ENCODE measurements at regions of chr2 and their contacts with region 1.

Region 1: GRCh38 chr2:157443795-157444640 is at the start of gene CYTIP:
- DNase-seq: peak; percentile 87
- H3K4me3 Mint-ChIP-seq: peak within 1 kb of the TSS; percentile 96
- H3K27ac Mint-ChIP-seq: peak within 1 kb of the TSS; percentile 96
- H3K4me1 Mint-ChIP-seq: peaks cover 41% of the 10 kb centered on the region
- H3K27me3 Mint-ChIP-seq: no peaks in the 10 kb centered on the region
- total RNA-seq, gene CYTIP: 234 to 279 TPM

Region 2: GRCh38 chr2:157386247-157386646 is 57.8 kb before region 1 on chr2:
- CTCF ChIA-PET with region 1: no interaction called
- POLR2A ChIA-PET with region 1: no interaction called
- DNase-seq: no peak
- H3K4me3 Mint-ChIP-seq: no peak overlapping the region
- H3K27ac Mint-ChIP-seq: no peak overlapping the region
- H3K4me1 Mint-ChIP-seq: peaks cover 28% of the 10 kb centered on the region
- H3K27me3 Mint-ChIP-seq: no peaks in the 10 kb centered on the region

Region 3: DNA sequence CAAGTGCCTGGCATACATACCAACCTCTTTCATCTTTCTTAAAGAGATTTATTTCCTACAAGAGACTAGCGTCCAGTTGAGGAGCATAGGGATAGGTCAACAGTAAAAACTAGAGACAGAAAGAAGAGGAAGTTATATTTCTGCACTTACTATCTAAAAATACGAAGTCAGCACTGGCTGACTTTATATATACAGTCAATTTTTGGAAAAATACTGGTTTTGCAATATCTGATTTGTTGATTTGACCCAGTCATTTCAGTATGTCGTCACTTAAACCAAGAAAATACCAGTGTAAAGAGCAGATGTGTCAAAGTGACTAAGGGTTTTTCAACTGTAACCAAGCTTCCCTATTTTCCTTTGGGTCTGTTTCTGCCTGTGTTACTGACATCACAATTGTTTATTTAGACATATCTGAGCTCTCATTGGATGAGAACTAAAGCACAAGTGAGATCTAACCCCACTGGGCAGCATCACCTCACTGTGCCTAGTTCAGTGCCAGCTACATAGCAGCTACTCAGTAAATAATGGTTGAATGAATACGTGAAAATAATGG is 23.2 kb before region 1 on chr2:
- CTCF ChIA-PET with region 1: interaction called, 19 read pairs
- POLR2A ChIA-PET with region 1: interaction called, 18 read pairs
- DNase-seq: no peak
- H3K4me3 Mint-ChIP-seq: no peak overlapping the region
- H3K27ac Mint-ChIP-seq: peak overlapping the region; percentile 93
- H3K4me1 Mint-ChIP-seq: peaks cover 79% of the 10 kb centered on the region
- H3K27me3 Mint-ChIP-seq: no peaks in the 10 kb centered on the region

Region 4: GRCh38 chr2:157433394-157433793 is 10.6 kb before region 1 on chr2:
- CTCF ChIA-PET with region 1: interaction called, 27 read pairs
- POLR2A ChIA-PET with region 1: interaction called, 18 read pairs
- DNase-seq: no peak
- H3K4me3 Mint-ChIP-seq: peak overlapping the region; percentile 96
- H3K27ac Mint-ChIP-seq: peak overlapping the region; percentile 96
- H3K4me1 Mint-ChIP-seq: peaks cover 76% of the 10 kb centered on the region
- H3K27me3 Mint-ChIP-seq: no peaks in the 10 kb centered on the region

Region 5: GRCh38 chr2:157460384-157460837 is 16.4 kb after region 1 on chr2:
- CTCF ChIA-PET with region 1: interaction called, 37 read pairs
- POLR2A ChIA-PET with region 1: interaction called, 7 read pairs
- DNase-seq: no peak
- H3K4me3 Mint-ChIP-seq: peak overlapping the region; percentile 54
- H3K27ac Mint-ChIP-seq: peak overlapping the region; percentile 65
- H3K4me1 Mint-ChIP-seq: peaks cover 94% of the 10 kb centered on the region
- H3K27me3 Mint-ChIP-seq: no peaks in the 10 kb centered on the region

Region 6: DNA sequence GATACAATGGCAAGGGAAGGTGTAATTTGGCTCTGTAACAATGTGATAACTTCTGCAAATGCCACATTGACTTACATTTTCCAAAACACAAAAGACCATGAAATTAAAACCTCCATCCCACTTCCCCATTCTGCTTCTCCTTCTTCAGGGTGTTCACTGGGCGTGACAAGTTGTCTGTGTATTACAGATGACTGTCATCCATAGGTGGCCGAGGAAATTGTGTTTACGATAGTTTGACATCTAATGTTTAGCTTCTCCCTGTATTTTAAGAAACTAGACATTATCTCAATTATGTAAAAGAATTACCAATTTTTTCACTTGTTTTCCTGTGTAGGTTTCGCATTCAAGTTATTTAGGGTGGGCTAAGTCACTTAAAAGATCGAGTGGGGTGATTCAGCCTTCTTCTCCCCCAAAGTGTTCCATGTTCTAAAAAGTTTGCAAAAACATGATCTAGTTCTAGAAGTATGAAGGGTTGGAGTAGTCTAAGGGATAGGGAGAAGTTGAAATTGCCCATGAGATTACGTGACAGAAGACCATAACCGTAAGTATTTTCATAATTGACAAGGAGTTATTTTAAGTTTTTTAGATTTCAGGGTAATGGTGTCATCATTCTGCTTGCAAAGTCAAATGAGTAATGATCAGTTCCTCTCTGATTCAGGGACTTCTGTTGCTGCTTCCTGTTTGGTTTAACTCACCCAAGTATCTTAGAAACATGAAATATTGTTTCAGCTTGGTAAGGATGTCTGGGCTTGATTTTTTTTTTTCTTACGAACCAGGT is 25.1 kb after region 1 on chr2:
- CTCF ChIA-PET with region 1: interaction called, 10 read pairs
- POLR2A ChIA-PET with region 1: interaction called, 13 read pairs
- DNase-seq: peak; percentile 52
- H3K4me3 Mint-ChIP-seq: peak overlapping the region; percentile 76
- H3K27ac Mint-ChIP-seq: peak overlapping the region; percentile 98
- H3K4me1 Mint-ChIP-seq: peaks cover 94% of the 10 kb centered on the region
- H3K27me3 Mint-ChIP-seq: no peaks in the 10 kb centered on the region

Region 7: DNA sequence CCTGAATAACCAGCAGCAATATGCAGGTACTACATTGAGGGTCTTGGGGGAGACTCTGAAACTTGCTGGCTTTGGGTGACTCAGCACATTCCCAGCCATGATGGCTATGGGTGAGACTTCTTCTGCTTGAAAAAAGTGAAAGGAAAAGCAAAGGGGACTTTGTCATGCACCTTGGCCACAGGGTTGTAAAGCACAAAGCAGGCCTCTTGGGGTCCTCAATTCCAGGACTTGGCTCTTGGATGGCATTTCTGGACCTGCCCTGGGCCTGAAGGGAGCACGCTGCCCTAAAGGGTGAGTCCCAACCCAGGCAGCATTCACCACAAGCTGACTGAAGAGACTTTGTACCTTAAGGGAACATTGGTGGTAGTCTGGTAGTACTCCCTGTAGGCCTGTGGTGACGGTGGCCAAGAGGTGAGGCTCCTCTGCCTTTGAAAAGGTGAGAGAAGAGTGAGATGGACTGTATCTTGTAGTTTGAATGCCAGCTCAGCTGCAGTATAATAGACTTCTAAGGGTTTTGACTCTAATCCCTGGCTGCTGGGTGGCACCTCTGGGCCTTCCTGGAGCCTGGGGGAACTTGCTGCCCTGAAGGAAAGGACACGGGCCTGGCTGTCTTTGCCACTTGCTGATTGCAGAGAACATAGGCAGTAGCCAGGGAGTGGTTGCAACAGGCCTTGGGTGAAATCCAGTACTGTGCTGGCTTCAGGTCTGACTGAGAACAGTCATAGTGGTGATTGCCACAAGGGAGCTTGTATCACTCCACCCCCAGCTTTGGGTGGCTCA is 36.4 kb after region 1 on chr2:
- CTCF ChIA-PET with region 1: interaction called, 5 read pairs
- POLR2A ChIA-PET with region 1: interaction called, 20 read pairs
- DNase-seq: peak; percentile 45
- H3K4me3 Mint-ChIP-seq: peak overlapping the region; percentile 62
- H3K27ac Mint-ChIP-seq: peak overlapping the region; percentile 88
- H3K4me1 Mint-ChIP-seq: peaks cover 81% of the 10 kb centered on the region
- H3K27me3 Mint-ChIP-seq: no peaks in the 10 kb centered on the region

Region 8: DNA sequence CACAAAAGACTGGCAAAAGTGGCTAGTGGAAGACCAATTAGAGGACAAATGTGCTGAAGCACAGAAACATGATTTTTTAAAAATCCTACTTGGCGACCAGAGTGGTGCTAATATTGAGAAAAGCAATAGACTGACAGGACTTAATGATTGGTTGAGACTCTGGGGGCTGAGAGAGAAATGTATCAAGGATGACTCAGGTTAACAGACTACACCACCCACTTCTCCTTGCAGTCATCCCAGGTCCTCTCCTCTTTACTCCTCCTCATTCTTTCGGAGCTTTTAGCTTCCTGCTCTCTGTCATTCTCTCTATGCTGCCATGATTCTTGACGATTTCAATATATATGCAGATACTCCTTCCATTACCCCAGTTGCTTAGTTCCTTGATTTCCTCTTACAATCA is 54.5 kb after region 1 on chr2:
- CTCF ChIA-PET with region 1: no interaction called
- POLR2A ChIA-PET with region 1: no interaction called
- DNase-seq: no peak
- H3K4me3 Mint-ChIP-seq: no peak overlapping the region
- H3K27ac Mint-ChIP-seq: no peak overlapping the region
- H3K4me1 Mint-ChIP-seq: peaks cover 26% of the 10 kb centered on the region
- H3K27me3 Mint-ChIP-seq: no peaks in the 10 kb centered on the region